H1 (cell line): ENCODE measurements at regions of chr3 and their contacts with region 1.

Region 1: DNA sequence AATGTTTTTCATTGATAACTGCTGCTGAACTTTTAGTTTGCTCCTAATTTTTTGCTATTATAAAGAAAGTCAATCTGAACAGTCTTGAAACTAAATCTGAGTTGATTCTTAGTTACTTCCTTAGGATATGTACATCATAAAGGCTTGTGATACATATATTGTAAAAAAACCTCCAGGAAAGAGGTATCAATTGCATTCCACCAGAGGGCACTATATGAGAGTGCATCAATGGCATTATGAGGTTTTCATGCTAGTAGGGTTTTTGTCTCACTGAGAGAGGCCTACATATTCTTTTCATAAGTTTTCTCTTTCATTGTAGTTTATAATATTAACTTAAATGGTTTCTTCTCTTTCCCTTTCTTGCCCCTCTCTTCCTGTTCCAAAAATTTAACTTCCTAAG is 46.9 kb downstream of the PIK3R4 start:
- DNase-seq: no peak
- H3K4me3 ChIP-seq: no peak overlapping the region
- H3K27ac ChIP-seq: no peak overlapping the region
- H3K4me1 ChIP-seq: no peaks in the 10 kb centered on the region
- H3K27me3 ChIP-seq: no peaks in the 10 kb centered on the region
- CTCF ChIP-seq: peak in 2 of 3 experiments; percentile 26 to 56; a peak in 2 of 4 replicates
- EP300 ChIP-seq: no peak
- POLR2A ChIP-seq: no peak
- RAD21 ChIP-seq: peak; percentile 64 to 67

Region 2: GRCh38 chr3:130711565-130712324 is 12.0 kb after region 1 on chr3:
- CTCF ChIA-PET with region 1: interaction called, 14 read pairs
- POLR2A ChIA-PET with region 1: interaction called, 3 read pairs
- DNase-seq: no peak
- H3K4me3 ChIP-seq: no peak overlapping the region
- H3K27ac ChIP-seq: no peak overlapping the region
- H3K4me1 ChIP-seq: no peaks in the 10 kb centered on the region
- H3K27me3 ChIP-seq: no peaks in the 10 kb centered on the region
- CTCF ChIP-seq: no peak
- EP300 ChIP-seq: no peak
- POLR2A ChIP-seq: no peak
- RAD21 ChIP-seq: no peak